ENCODE measurements at regions of chr9 and their contacts with region 1.

Region 1: GRCh38 chr9:97638666-97639065 is 5.0 kb downstream of the NCBP1 start:
- DNase-seq: peak in 1 of 9 experiments; percentile 13
- ATAC-seq: no peak
- H3K4me3 ChIP-seq: no peak overlapping the region
- H3K4me3 Mint-ChIP-seq: no peak overlapping the region
- H3K27ac ChIP-seq: no peak overlapping the region
- H3K27ac Mint-ChIP-seq: peak overlapping the region; percentile 62
- H3K4me1 ChIP-seq: peaks cover 38% of the 10 kb centered on the region
- H3K4me1 Mint-ChIP-seq: peaks cover 66% of the 10 kb centered on the region
- H3K27me3 ChIP-seq: no peaks in the 10 kb centered on the region
- H3K27me3 Mint-ChIP-seq: no peaks in the 10 kb centered on the region
- CTCF ChIP-seq: no peak

Region 2: DNA sequence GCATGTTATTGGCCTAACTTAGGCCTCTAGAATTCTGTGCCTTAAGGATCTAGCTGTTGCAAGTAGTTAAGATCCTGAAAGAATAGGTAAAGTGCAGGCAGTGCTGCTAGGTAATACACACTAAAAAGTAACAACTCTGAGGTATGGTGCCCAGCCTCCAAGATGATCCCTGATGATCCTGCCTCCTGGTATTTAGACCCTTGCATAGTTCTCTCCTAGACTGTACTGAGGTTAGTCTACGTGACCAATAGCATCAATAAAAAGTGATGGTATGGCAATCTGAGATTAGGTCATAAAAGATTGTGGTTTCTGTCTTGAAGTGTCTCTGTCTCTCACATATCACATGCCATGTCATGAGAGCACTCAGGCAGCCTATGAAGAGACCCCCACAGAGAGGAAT is 14.7 kb before region 1 on chr9:
- CTCF ChIA-PET with region 1: no interaction called
- POLR2A ChIA-PET with region 1: no interaction called
- intact Hi-C with region 1: no loop called
- DNase-seq: no peak
- ATAC-seq: no peak
- H3K4me3 ChIP-seq: no peak overlapping the region
- H3K4me3 Mint-ChIP-seq: no peak overlapping the region
- H3K27ac ChIP-seq: no peak overlapping the region
- H3K27ac Mint-ChIP-seq: no peak overlapping the region
- H3K4me1 ChIP-seq: no peaks in the 10 kb centered on the region
- H3K4me1 Mint-ChIP-seq: peaks cover 10% of the 10 kb centered on the region
- H3K27me3 ChIP-seq: no peaks in the 10 kb centered on the region
- H3K27me3 Mint-ChIP-seq: no peaks in the 10 kb centered on the region
- CTCF ChIP-seq: no peak

Region 3: DNA sequence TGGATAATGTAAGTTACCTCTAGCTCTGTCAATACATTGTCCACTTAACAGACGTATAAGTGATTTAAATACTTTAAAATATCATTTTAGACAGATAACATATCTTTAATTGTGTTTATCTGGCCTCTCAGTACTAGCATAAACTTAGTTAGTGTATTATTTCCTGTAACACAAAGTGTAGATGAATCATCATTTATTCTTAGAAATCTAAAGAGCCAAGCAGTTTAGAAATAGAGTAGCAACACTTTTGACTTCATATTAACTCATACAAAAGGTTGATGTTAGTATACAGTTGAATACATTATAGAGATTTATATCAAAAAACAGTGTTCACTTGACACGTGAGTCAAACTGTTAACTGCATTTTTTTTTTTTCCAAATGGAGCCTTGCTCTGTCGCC is 13.0 kb after region 1 on chr9:
- CTCF ChIA-PET with region 1: interaction called, 3 read pairs
- POLR2A ChIA-PET with region 1: no interaction called
- intact Hi-C with region 1: loop called in 1 of 2 experiments (anchors 2 kb)
- DNase-seq: no peak
- ATAC-seq: no peak
- H3K4me3 ChIP-seq: no peak overlapping the region
- H3K4me3 Mint-ChIP-seq: no peak overlapping the region
- H3K27ac ChIP-seq: no peak overlapping the region
- H3K27ac Mint-ChIP-seq: no peak overlapping the region
- H3K4me1 ChIP-seq: no peaks in the 10 kb centered on the region
- H3K4me1 Mint-ChIP-seq: peaks cover 2% of the 10 kb centered on the region
- H3K27me3 ChIP-seq: no peaks in the 10 kb centered on the region
- H3K27me3 Mint-ChIP-seq: no peaks in the 10 kb centered on the region
- CTCF ChIP-seq: no peak

Region 4: DNA sequence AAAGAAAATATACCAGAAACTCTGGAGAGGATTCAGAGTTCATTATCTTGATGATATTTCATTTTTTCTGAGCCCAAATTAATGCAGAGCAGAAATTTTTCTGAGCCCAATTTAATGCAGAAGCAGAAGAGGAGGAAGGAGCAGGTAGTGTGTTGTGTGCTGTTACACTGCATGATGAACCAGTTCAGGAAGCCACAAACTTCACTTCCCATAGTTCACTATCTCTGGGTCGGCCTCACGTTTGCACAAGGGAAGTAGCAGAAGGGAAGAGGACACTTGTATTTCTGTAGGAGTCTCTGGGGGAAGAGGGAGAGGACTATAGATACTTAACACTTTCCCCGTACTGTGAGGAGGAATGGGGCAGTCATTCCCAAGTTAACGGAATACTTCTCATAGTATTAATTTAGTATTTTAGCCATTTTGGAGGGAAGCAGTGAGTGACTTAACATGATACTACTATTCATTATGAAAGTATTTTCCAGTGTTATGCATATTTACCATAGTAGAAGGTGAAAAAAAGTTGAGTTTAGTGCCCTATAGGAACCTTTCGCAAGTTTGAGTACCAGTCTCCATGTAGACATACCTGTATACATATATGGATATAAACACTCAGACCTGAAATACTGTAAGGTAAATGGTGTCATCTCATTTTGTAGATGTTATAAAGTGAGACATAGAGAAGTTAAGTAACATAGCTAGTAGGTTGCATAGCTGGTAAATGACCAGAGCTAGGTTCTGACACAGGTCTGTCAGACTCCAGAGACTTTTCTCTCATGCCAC is 28.4 kb after region 1 on chr9:
- CTCF ChIA-PET with region 1: no interaction called
- POLR2A ChIA-PET with region 1: no interaction called
- intact Hi-C with region 1: loop called in 1 of 2 experiments (anchors 1 kb)
- DNase-seq: no peak
- ATAC-seq: no peak
- H3K4me3 ChIP-seq: no peak overlapping the region
- H3K4me3 Mint-ChIP-seq: no peak overlapping the region
- H3K27ac ChIP-seq: no peak overlapping the region
- H3K27ac Mint-ChIP-seq: peak overlapping the region; percentile 72
- H3K4me1 ChIP-seq: no peaks in the 10 kb centered on the region
- H3K4me1 Mint-ChIP-seq: peaks cover 16% of the 10 kb centered on the region
- H3K27me3 ChIP-seq: no peaks in the 10 kb centered on the region
- H3K27me3 Mint-ChIP-seq: no peaks in the 10 kb centered on the region
- CTCF ChIP-seq: no peak

Measured in CD8-positive, alpha-beta T cell (primary cell).